BJ (cell line): ENCODE measurements at regions of chr11 and their contacts with region 1.

Region 1: DNA sequence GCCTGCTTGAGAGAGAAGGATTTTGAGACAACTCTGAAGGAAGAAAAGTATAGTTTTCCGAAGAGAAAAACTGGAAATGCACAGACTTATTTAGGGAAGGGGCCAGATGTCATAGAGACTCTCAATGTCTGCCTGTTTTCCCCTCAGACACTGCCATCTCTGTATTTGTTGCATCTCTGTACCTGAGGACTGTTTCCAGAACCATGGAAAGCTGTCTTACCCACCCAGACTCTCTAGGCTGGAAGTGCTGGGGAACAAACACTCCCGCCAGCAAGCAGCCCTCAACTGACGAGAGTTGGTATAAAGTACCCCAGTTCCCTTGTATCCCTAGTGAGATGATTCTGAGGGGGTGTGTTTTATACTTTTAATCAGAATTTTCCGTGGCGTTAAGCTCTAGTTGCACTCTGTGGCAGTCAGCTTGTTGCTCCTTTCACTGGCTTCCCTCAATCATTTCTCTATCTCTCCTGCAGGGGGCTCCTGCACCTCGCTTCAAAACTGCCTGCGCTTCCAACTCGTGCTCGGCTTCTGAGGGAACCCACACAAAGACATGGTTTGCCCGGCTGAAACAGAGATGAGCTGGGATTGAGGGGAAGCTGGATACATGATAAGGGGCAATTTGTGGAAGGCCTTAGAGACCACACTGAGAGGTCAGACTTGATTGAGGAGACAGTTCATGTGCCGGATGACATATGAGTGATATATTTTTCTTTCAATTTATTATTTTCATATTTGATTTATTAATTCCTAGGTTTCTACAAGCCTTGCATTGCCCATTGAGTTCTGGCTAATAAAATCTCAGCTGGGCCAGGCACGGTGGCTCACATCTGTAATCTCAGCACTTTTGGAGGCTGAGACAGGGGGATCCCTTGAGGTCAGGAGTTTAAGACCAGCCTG is 36.9 kb upstream of the CLPB start:
- DNase-seq: peak; percentile 12
- H3K4me3 ChIP-seq: no peak overlapping the region
- H3K27me3 ChIP-seq: peaks cover 24% of the 10 kb centered on the region
- CTCF ChIP-seq: peak; percentile 87

Region 2: GRCh38 chr11:72446902-72447769 is 24.1 kb before region 1 on chr11:
- CTCF ChIA-PET with region 1: interaction called, 43 read pairs
- POLR2A ChIA-PET with region 1: no interaction called
- DNase-seq: no peak
- H3K4me3 ChIP-seq: no peak overlapping the region
- H3K27me3 ChIP-seq: peaks cover 7% of the 10 kb centered on the region; the same call in 1 of the 2 replicates
- CTCF ChIP-seq: peak; percentile 82

Region 3: GRCh38 chr11:72460091-72460647 is 11.1 kb before region 1 on chr11:
- CTCF ChIA-PET with region 1: interaction called, 43 read pairs
- POLR2A ChIA-PET with region 1: no interaction called
- DNase-seq: no peak
- H3K4me3 ChIP-seq: no peak overlapping the region
- H3K27me3 ChIP-seq: peaks cover 21% of the 10 kb centered on the region
- CTCF ChIP-seq: no peak

Region 4: GRCh38 chr11:72493426-72494108 is 22.3 kb after region 1 on chr11:
- CTCF ChIA-PET with region 1: interaction called, 15 read pairs
- POLR2A ChIA-PET with region 1: no interaction called
- DNase-seq: no peak
- H3K4me3 ChIP-seq: no peak overlapping the region
- H3K27me3 ChIP-seq: no peaks in the 10 kb centered on the region
- CTCF ChIP-seq: no peak

Region 5: GRCh38 chr11:72573072-72573854 is 102.0 kb after region 1 on chr11:
- CTCF ChIA-PET with region 1: interaction called, 31 read pairs
- POLR2A ChIA-PET with region 1: no interaction called
- DNase-seq: no peak
- H3K4me3 ChIP-seq: no peak overlapping the region
- H3K27me3 ChIP-seq: peaks cover 2% of the 10 kb centered on the region; the same call in 1 of the 2 replicates
- CTCF ChIP-seq: peak; percentile 72

Region 6: GRCh38 chr11:72683782-72684200 is 212.5 kb after region 1 on chr11:
- CTCF ChIA-PET with region 1: interaction called, 32 read pairs
- POLR2A ChIA-PET with region 1: no interaction called
- DNase-seq: no peak
- H3K4me3 ChIP-seq: no peak overlapping the region
- H3K27me3 ChIP-seq: no peaks in the 10 kb centered on the region; the same call in 1 of the 2 replicates
- CTCF ChIP-seq: peak; percentile 94

Region 7: GRCh38 chr11:73141848-73142286 is 670.6 kb after region 1 on chr11:
- CTCF ChIA-PET with region 1: no interaction called
- POLR2A ChIA-PET with region 1: no interaction called
- DNase-seq: no peak
- H3K4me3 ChIP-seq: peak overlapping the region; percentile 95
- H3K27me3 ChIP-seq: no peaks in the 10 kb centered on the region
- CTCF ChIP-seq: 0 out of 2 replicates have a peak, but pooled peaks have one; percentile 7